PC-9 (cell line): ENCODE measurements at regions of chr4 and their contacts with region 1.

Region 1: GRCh38 chr4:73676861-73677323 is 56.7 kb upstream of the RASSF6 start:
- DNase-seq: peak; percentile 38 to 95
- H3K4me3 ChIP-seq: no peak overlapping the region
- H3K27ac ChIP-seq: peak overlapping the region; percentile 94
- H3K4me1 ChIP-seq: peaks cover 24% of the 10 kb centered on the region
- H3K27me3 ChIP-seq: no peaks in the 10 kb centered on the region
- CTCF ChIP-seq: no peak

Region 2: GRCh38 chr4:73520821-73521220 is 156.1 kb before region 1 on chr4:
- CTCF ChIA-PET with region 1: no interaction called
- POLR2A ChIA-PET with region 1: no interaction called
- intact Hi-C with region 1: no loop called
- DNase-seq: no peak
- H3K4me3 ChIP-seq: no peak overlapping the region
- H3K27ac ChIP-seq: no peak overlapping the region
- H3K4me1 ChIP-seq: no peaks in the 10 kb centered on the region
- H3K27me3 ChIP-seq: no peaks in the 10 kb centered on the region
- CTCF ChIP-seq: no peak

Region 3: DNA sequence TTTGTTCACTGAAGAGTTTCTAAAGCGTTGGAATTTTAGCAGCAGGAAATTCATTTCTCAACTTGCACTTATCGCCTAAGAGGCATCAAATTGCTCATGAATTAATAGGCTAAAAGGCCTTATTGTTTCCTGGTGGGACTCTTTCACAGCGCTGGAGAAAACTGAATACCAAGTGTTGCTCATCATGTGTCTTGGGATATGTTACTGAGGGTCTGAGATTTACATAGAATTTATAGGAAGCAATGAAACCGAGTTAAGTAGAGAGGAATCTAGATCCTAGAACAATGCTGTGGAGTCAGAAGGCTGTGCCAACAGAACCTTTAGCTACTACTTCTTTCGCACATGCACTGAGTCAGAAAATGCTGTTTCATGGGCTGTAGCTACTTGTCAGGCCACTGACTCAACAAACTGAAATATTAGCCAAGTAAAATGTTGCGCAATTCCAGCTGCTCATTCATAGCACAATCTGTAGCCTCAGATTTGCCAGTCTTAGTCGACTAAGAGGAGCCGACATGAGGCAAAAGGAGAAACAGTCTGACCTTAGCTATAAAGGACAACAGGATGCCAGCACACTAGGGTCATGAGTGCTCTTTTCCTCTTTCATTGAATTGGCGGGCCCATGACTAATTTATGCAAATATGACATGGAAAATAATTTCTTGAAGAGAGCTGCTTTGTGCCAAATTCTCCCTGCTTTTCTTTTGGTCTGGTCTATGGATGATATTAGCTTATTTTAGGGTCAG is 27.6 kb after region 1 on chr4:
- CTCF ChIA-PET with region 1: no interaction called
- POLR2A ChIA-PET with region 1: interaction called, 4 read pairs
- intact Hi-C with region 1: loop called (anchors 2 kb)
- DNase-seq: peak; percentile 33 to 87
- H3K4me3 ChIP-seq: peak overlapping the region; percentile 13; the same call in 1 of the 2 replicates
- H3K27ac ChIP-seq: peak overlapping the region; percentile 99
- H3K4me1 ChIP-seq: peaks cover 52% of the 10 kb centered on the region
- H3K27me3 ChIP-seq: no peaks in the 10 kb centered on the region
- CTCF ChIP-seq: no peak

Region 4: GRCh38 chr4:73740353-73740778 is 63.5 kb after region 1 on chr4 and contains the start of gene CXCL8:
- CTCF ChIA-PET with region 1: no interaction called
- POLR2A ChIA-PET with region 1: no interaction called
- intact Hi-C with region 1: loop called (anchors 5 kb)
- DNase-seq: peak; percentile 56 to 83
- H3K4me3 ChIP-seq: peak within 1 kb of the TSS; percentile 24; the same call in 1 of the 2 replicates
- H3K27ac ChIP-seq: peak within 1 kb of the TSS; percentile 78
- H3K4me1 ChIP-seq: peaks cover 22% of the 10 kb centered on the region
- H3K27me3 ChIP-seq: no peaks in the 10 kb centered on the region
- CTCF ChIP-seq: no peak
- total RNA-seq, gene CXCL8: 0.35 and 0.38 TPM in 2 replicates

Region 5: DNA sequence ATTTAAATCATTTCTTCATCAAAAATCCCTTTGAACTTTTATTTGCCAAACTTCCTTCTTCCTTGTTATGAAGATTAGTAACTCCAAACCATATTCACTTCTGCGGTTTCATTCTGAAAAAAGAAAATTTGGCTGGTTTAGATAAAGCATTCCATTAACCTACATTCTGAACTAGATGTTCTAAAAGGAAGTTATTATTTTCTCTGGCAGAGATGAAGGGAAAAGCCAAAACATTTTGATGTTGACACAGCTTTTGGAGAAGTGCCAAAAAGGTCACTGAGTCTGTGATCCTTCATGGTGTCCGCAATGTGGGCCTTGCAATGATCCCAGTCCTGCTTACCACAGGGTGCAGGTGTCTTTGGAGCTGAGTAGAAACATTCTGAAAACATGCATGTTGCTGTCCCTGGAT is 99.4 kb after region 1 on chr4:
- CTCF ChIA-PET with region 1: no interaction called
- POLR2A ChIA-PET with region 1: interaction called, 32 read pairs
- intact Hi-C with region 1: no loop called
- DNase-seq: peak; percentile 4 to 67
- H3K4me3 ChIP-seq: no peak overlapping the region
- H3K27ac ChIP-seq: no peak overlapping the region
- H3K4me1 ChIP-seq: no peaks in the 10 kb centered on the region
- H3K27me3 ChIP-seq: no peaks in the 10 kb centered on the region
- CTCF ChIP-seq: no peak